Esophagus muscularis mucosa (tissue), 4 donors: ENCODE measurements at regions of chr7 and their contacts with region 1.

Region 1: GRCh38 chr7:16431646-16432424 is 10.5 kb upstream of the CRPPA start:
- DNase-seq: no peak
- H3K4me3 ChIP-seq: no peak overlapping the region
- H3K27ac ChIP-seq: no peak overlapping the region
- H3K4me1 ChIP-seq: no peaks in the 10 kb centered on the region
- H3K27me3 ChIP-seq: no peaks in the 10 kb centered on the region
- CTCF ChIP-seq: peak in 2 of 3 experiments; percentile 18 to 33
- EP300 ChIP-seq: no peak
- POLR2A ChIP-seq: no peak

Region 2: GRCh38 chr7:16564909-16565426 is 133.1 kb after region 1 on chr7:
- intact Hi-C with region 1: loop called (anchors 10 kb)
- DNase-seq: no peak
- H3K4me3 ChIP-seq: no peak overlapping the region
- H3K27ac ChIP-seq: no peak overlapping the region
- H3K4me1 ChIP-seq: peaks cover 0 to 9% (median 0%) of the 10 kb centered on the region in 4 donors
- H3K27me3 ChIP-seq: no peaks in the 10 kb centered on the region
- CTCF ChIP-seq: peak; percentile 60 to 83 (median 78)
- EP300 ChIP-seq: no peak
- POLR2A ChIP-seq: no peak